Left ventricle myocardium inferior (tissue), 1 donor: ENCODE measurements at regions of chr3 and their contacts with region 1.

Region 1: GRCh38 chr3:24680214-24680967 is 185.7 kb upstream of the THRB start:
- DNase-seq: peak; percentile 59
- H3K4me3 ChIP-seq: no peak overlapping the region
- H3K27ac ChIP-seq: no peak overlapping the region
- H3K4me1 ChIP-seq: no peaks in the 10 kb centered on the region
- H3K27me3 ChIP-seq: no peaks in the 10 kb centered on the region
- CTCF ChIP-seq: peak; percentile 88

Region 2: DNA sequence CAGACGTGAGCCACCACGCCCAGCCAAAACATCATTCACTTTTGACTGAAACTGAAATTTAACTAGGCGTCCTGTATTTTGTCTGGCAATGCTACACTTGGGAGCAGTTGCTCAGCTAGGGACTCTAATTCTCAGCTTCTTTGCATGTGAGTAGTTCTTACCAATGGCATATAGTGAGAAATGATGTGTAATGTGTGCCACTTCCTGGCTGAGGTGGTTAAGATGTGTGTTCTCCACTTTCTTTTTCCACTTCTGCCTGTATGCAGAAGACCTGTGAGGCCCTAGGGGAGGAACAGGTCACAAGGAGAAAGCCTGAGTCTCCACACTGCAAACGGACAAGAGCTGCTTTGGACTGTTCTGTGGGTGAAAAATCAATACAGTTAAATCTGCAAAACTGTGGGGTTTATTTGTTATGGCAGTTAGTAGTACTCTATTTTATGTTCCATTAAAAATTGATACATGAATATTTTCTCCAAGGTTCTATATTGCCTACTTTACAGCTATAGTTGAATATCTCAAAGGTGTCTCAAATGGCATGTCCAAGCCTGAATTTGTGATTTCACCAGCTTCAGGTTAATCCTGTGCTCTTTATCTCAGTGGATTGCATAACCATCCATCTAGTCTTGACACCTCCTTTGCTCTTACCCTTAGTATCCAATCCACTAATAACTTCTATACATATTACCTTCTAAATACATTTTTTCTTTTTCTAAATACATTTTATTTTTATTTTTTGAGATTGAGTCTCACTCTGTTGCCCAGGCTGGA is 676.0 kb before region 1 on chr3:
- intact Hi-C with region 1: loop called (anchors 10 kb)
- DNase-seq: no peak
- H3K4me3 ChIP-seq: no peak overlapping the region
- H3K27ac ChIP-seq: no peak overlapping the region
- H3K4me1 ChIP-seq: no peaks in the 10 kb centered on the region
- H3K27me3 ChIP-seq: no peaks in the 10 kb centered on the region
- CTCF ChIP-seq: no peak

Region 3: DNA sequence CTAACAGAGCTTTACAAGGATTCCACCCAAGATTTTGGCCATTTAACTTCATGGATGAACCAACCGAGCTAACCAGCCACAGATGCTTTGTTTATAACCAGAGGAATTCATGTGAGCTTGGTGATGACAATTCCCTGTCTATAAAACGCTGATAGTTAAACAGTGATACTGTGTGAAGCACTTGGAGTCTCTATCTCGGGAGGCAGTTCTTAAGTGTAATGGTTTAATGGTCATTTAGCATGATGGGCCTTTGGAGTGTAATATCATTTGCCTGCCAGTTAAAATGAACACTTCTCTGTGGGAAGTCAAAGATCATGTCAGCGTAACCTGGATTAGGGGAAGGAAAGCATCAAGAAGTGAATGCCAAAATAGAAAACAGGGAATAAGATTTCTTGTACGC is 182.8 kb after region 1 on chr3:
- intact Hi-C with region 1: no loop called
- DNase-seq: no peak
- H3K4me3 ChIP-seq: no peak overlapping the region
- H3K27ac ChIP-seq: no peak overlapping the region
- H3K4me1 ChIP-seq: no peaks in the 10 kb centered on the region
- H3K27me3 ChIP-seq: peaks cover 3% of the 10 kb centered on the region
- CTCF ChIP-seq: no peak